ENCODE measurements at regions of chr3 and their contacts with region 1.

Region 1: DNA sequence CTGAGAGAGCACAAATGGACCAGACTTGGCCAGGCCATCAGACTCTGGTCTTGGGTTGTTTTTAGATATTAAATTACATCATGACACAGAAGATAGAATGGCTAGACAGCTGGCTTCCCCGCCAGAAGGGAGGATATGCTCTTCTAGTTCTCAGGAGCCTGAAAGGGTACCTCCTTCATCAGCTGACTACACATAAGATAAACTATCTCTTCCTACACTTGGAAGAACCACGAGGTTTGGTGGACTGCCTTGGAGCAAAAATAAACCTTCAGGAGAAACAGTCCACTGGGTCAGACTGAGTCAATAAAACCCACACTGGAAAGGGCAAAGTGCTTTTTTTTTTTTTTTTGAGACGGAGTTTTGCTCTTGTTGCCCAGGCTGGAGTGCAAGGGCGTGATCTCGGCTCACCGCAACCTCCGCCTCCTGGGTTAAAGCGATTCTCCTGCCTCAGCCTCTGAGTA is 26.3 kb upstream of the DYNC1LI1 start:
- DNase-seq: no peak

Region 2: DNA sequence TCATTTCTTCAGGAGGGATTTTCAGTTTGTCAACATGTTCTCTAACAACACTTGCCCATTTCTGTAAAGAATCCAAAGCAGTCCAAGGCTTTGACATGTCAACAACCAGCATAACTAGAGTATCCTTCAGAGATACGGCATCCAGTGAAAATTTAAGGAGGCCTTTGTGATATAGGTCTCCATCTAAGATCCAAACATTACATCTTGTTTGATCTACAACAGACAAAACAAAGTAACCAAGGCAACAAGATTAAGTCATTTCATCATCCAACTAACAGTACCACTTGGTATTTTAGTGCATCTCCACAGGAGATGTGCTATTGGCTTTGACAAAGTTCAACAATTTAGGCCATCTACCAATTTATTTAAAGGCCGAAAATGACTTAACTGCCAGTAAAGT is 52.0 kb before region 1 on chr3:
- intact Hi-C with region 1: no loop called
- DNase-seq: no peak

Region 3: DNA sequence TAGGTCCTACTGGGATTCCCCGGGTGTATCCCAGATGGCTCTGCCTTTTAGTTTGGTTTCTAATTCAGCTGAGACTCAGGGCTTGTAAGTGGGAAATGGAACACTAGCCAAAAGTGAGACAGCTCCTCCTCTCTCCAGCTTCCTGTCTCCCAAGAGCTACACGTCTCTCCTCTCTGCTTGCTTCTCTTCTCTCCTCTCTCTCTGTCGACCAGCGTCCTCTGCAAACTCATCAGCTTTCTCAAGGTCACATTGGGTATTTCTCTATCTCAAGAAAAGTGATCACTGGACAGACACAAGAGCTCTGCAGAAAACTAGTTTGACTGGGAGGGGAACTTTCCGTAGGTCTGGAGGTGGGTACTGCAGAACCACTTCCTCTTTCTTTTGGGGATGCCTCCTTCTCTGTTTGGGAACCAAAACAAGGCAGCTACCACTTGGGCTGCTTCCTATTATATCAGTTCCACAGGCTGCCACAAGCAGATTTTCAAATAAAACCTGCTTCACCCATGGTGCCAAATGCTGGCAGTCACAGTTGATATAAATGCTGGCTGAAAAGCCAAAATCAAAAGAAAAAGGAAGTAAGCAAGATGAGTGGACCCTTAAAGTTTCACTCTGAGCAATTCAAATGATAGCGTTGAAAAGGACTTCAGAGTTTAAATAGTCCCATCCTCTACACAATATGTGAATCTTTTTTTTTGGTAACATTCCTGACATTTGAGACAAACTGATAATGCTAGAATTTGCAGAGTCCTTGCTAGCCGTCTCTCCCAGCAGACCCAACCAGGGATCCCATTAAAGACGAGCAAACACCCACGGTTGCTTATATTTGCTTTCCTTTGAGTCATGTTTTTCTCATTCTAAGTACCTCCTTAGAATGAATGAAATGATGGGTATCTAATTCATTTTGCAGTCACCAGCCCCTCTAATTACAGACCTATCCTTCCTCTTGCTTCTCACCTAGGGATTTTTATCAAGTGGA is 19.1 kb before region 1 on chr3:
- intact Hi-C with region 1: loop called (anchors 2 kb)
- DNase-seq: no peak

Region 4: DNA sequence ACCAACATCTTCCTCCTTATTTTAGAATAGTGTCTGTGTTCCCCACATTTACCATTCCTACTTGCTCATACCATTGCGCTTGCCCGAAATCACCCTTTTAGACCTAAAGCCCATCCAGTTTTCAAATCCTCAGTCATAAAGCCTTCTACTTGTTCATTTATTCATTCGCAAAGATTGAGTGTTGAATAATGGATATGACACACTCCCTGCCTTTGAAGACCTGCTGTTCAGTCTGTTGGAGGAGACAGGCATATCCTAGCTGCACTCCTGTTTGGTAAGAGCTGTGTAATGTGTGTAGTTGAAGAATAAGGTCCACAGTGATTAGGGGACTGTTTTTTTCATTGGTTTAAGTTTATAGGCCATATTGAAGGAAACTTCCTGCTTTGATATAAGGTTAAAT is 89.8 kb after region 1 on chr3:
- intact Hi-C with region 1: no loop called
- DNase-seq: no peak